ENCODE measurements at regions of chr9 and their contacts with region 1.

Region 1: DNA sequence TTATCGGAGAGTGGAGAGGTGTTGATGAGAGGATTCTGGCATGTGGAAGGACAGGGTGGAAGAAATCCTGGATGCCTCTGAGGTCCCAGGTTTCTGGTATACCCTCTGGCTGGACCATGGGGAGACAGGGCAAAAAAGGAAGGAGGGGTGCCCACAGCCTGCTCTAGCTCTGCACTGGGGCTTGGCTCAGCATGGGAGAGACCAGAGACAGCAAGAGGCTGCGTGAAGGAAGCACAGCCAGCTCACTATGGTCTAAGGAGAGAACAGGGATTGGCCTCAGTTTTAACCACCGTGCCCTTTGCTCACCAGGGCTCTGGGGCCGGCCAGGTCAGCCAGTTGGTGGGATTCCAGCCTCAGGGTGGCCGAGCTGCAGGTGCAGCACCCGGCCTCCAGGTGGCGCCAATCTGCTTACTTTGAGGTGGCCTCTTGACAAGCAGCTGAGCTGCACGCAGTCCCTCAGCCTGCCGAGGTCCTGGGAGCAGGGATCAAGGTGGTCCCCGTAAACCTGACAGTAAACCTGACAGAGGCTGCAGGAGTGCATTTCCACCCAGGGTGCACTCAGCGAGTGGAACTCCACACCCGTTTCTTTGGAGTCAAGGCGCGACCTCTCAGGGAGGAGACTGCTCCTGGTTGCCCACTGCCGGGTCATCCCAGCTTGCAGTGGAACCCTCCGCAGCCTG is 25.0 kb upstream of the SPTLC1 start:
- DNase-seq: peak; percentile 72 to 88 (median 74)
- ATAC-seq: peak; percentile 58 to 76 (median 71)
- H3K4me3 ChIP-seq: peak overlapping the region in 9 of 12 donors; percentile 12 to 60 (median 49)
- H3K27ac ChIP-seq: no peak overlapping the region
- H3K4me1 ChIP-seq: peaks cover 0 to 21% (median 8%) of the 10 kb centered on the region in 12 donors
- H3K27me3 ChIP-seq: peaks cover 4 to 17% (median 7%) of the 10 kb centered on the region in 9 donors
- CTCF ChIP-seq: peak; percentile 82 to 96 (median 92)
- POLR2A ChIP-seq: no peak

Region 2: GRCh38 chr9:91422758-91423711 is 717.2 kb before region 1 on chr9:
- intact Hi-C with region 1: no loop called
- DNase-seq: peak; percentile 52 to 71 (median 69)
- ATAC-seq: peak; percentile 14 to 51 (median 34)
- H3K4me3 ChIP-seq: peak overlapping the region; percentile 44 to 88 (median 72)
- H3K27ac ChIP-seq: peak overlapping the region; percentile 86 to 97 (median 93)
- H3K4me1 ChIP-seq: peaks cover 0 to 65% (median 32%) of the 10 kb centered on the region in 12 donors
- H3K27me3 ChIP-seq: no peaks in the 10 kb centered on the region
- CTCF ChIP-seq: peak in 8 of 12 donors; percentile 5 to 53 (median 19)
- POLR2A ChIP-seq: peak in 1 of 2 donors; percentile 32

Region 3: GRCh38 chr9:92223758-92224157 is 83.5 kb after region 1 on chr9:
- intact Hi-C with region 1: loop called in 1 of 10 experiments (anchors 5 kb)
- DNase-seq: no peak
- ATAC-seq: peak in 1 of 4 donors; percentile 22
- H3K4me3 ChIP-seq: no peak overlapping the region
- H3K27ac ChIP-seq: no peak overlapping the region
- H3K4me1 ChIP-seq: no peaks in the 10 kb centered on the region
- H3K27me3 ChIP-seq: no peaks in the 10 kb centered on the region
- CTCF ChIP-seq: no peak
- POLR2A ChIP-seq: no peak

Region 4: GRCh38 chr9:92234514-92234913 is 94.3 kb after region 1 on chr9:
- intact Hi-C with region 1: loop called in 6 of 10 experiments (anchors 2 to 10 kb)
- DNase-seq: no peak
- ATAC-seq: no peak
- H3K4me3 ChIP-seq: no peak overlapping the region
- H3K27ac ChIP-seq: no peak overlapping the region
- H3K4me1 ChIP-seq: no peaks in the 10 kb centered on the region
- H3K27me3 ChIP-seq: no peaks in the 10 kb centered on the region
- CTCF ChIP-seq: no peak
- POLR2A ChIP-seq: no peak

Region 5: DNA sequence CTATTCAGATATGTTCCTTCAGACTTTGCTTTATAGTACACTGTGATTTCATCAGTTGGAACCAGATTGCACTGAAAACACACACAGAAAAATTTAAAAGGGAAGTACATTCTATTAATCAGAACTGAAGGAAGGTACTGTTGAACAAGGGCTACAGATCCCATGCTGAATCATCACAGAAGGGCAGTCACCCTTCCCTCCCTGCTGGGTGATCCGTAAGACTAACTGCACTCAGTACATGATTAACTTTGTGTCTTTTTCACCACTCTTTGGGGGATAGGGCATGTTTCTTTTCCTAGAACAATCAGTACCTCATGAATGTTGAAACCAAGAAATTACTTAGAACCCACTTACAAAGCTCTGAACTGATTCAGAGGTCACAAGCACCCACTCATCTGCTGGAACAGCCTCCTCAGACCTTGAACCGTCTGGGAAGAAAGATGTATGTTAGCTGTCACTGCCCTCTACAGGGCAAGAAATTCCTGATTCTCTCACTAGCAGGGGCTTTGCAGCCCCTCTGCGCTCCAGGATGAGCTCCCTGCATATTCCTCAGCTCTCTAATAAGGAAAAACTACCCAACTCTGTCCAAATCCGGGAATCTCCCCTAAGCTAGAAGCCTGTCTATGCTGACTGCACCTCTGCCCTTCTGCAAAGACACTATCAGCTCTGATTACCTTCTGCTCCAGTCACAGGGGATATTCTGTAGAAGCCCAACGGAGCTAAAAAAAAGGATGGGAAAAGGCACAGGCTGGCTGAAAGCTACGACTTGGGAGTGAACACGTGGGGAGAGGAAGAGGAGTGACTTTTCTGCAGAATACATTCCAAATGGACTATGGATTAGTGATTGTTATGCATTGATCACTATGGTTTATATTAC is 102.3 kb after region 1 on chr9:
- intact Hi-C with region 1: loop called in 9 of 10 experiments (anchors 2 to 10 kb)
- DNase-seq: no peak
- ATAC-seq: no peak
- H3K4me3 ChIP-seq: no peak overlapping the region
- H3K27ac ChIP-seq: no peak overlapping the region
- H3K4me1 ChIP-seq: no peaks in the 10 kb centered on the region
- H3K27me3 ChIP-seq: no peaks in the 10 kb centered on the region
- CTCF ChIP-seq: peak in 6 of 12 donors; percentile 26 to 44 (median 31)
- POLR2A ChIP-seq: no peak

Region 6: GRCh38 chr9:92293452-92294296 is 153.5 kb after region 1 on chr9 and contains the start of gene IARS1:
- intact Hi-C with region 1: loop called in 5 of 10 experiments (anchors 2 to 10 kb)
- DNase-seq: peak; percentile 98 to 99 (median 98)
- ATAC-seq: peak; percentile 99 to 100 (median 100)
- H3K4me3 ChIP-seq: peak within 1 kb of the TSS; percentile 41 to 91 (median 72)
- H3K27ac ChIP-seq: peak within 1 kb of the TSS in 11 of 12 donors; percentile 51 to 85 (median 71)
- H3K4me1 ChIP-seq: peaks cover 0 to 34% (median 22%) of the 10 kb centered on the region in 12 donors
- H3K27me3 ChIP-seq: no peaks in the 10 kb centered on the region
- CTCF ChIP-seq: peak in 11 of 12 donors; percentile 6 to 65 (median 36)
- POLR2A ChIP-seq: peak in 1 of 2 donors; percentile 77
- total RNA-seq, gene IARS1: 44.2 to 85.3 (median 68.1) TPM

Region 7: DNA sequence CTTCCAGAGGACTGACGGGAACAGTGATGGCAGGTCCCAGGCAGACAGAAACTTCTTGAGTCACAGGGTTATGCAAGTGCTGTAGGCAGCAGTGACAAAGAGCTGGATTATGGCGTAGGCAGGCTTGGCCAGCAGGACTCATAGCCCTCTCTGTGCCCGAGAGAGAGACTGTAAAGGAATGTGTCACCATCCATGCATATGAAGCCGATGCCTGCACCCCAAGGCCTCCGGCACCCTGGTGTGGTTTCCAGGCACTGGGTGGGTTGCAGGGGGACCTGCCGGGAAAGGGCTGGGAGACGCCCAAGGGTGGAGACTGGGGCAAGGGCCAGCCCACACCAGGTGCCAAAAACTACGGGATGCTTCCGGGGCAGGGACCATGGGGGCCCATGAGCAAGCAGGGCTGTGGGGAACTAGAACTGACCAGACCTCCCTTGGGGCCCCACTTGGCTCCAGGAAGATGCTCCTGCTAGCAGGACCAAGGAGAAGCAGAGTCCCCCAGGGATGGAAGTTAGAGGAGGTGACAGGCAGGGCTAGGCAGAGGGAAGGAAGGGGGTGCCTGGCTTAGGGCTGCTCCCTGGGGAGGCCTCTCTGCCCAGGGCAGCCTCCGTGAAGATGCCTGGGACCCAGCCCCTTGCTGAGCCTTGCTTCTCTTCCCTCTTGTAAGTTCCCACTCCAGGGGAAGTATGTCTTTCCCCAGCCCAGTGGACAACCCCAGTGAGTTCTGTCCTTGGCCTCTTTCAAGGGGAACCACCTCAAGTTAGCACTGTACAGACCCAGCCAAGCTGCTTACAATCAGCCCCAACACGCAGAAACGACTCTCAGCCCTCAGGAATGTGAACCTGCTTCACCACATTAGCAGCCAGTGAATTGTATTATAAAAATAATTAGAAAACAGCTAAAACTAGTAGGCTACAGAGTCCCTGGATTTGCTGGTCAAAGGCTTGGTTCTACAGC is 540.2 kb after region 1 on chr9:
- intact Hi-C with region 1: no loop called
- DNase-seq: no peak
- ATAC-seq: peak in 1 of 4 donors; percentile 43
- H3K4me3 ChIP-seq: no peak overlapping the region
- H3K27ac ChIP-seq: no peak overlapping the region
- H3K4me1 ChIP-seq: peaks cover 0 to 6% (median 0%) of the 10 kb centered on the region in 12 donors
- H3K27me3 ChIP-seq: no peaks in the 10 kb centered on the region
- CTCF ChIP-seq: no peak
- POLR2A ChIP-seq: no peak

Measured in heart left ventricle (tissue), 16 donors.